ENCODE measurements at regions of chr7 and their contacts with region 1.

Region 1: GRCh38 chr7:150448789-150449147 is 1.7 kb upstream of the GIMAP8 start:
- DNase-seq: peak; percentile 76 to 84
- ATAC-seq: peak in 7 of 8 donors; percentile 42 to 64 (median 59)
- H3K4me3 ChIP-seq: peak overlapping the region in 4 of 10 donors; percentile 3 to 67 (median 36)
- H3K27ac ChIP-seq: peak overlapping the region in 9 of 10 donors; percentile 73 to 95 (median 90)
- H3K4me1 ChIP-seq: peaks cover 0 to 54% (median 32%) of the 10 kb centered on the region in 9 donors
- H3K27me3 ChIP-seq: no peaks in the 10 kb centered on the region
- CTCF ChIP-seq: peak; percentile 83 to 95 (median 91)

Region 2: GRCh38 chr7:150317748-150318444 is 130.9 kb before region 1 on chr7:
- intact Hi-C with region 1: no loop called
- DNase-seq: no peak
- ATAC-seq: no peak
- H3K4me3 ChIP-seq: no peak overlapping the region
- H3K27ac ChIP-seq: peak overlapping the region in 1 of 10 donors; percentile 24
- H3K4me1 ChIP-seq: peaks cover 0 to 8% (median 6%) of the 10 kb centered on the region in 9 donors
- H3K27me3 ChIP-seq: peaks cover 0 to 11% (median 2%) of the 10 kb centered on the region in 7 donors
- CTCF ChIP-seq: no peak

Region 3: DNA sequence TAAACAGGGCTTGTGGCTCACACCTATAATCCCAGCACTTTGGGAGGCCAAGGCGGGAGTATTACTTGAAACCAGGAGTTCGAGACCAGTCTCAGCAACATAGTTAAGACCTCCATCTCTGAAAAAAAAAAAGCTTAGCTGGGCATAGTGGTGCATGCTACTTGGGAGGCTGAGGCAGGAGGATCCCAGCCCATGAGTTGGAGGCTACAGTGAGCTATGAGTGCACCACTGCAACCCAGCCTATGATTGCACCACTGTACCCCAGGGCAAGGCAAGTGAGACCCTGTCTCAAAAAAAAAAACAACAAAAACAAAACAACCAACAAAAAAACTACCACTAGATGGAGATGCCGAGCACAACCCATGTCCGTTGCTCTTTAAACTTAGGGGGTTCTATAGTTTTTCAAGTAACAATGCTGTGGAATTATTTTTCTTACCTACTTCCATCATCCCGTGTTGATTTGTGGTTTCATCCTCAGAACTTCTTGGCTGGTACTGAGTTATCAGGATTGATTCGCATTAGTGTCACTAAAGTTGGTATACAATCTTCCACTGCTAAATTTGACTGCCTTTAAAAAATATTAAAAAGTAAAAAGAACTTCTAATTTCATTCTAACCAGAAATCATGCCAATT is 92.4 kb before region 1 on chr7:
- intact Hi-C with region 1: no loop called
- DNase-seq: no peak
- ATAC-seq: peak in 1 of 8 donors; percentile 19
- H3K4me3 ChIP-seq: no peak overlapping the region
- H3K27ac ChIP-seq: no peak overlapping the region
- H3K4me1 ChIP-seq: peaks cover 0 to 14% (median under 1%) of the 10 kb centered on the region in 9 donors
- H3K27me3 ChIP-seq: no peaks in the 10 kb centered on the region
- CTCF ChIP-seq: peak; percentile 39 to 79 (median 71)

Region 4: DNA sequence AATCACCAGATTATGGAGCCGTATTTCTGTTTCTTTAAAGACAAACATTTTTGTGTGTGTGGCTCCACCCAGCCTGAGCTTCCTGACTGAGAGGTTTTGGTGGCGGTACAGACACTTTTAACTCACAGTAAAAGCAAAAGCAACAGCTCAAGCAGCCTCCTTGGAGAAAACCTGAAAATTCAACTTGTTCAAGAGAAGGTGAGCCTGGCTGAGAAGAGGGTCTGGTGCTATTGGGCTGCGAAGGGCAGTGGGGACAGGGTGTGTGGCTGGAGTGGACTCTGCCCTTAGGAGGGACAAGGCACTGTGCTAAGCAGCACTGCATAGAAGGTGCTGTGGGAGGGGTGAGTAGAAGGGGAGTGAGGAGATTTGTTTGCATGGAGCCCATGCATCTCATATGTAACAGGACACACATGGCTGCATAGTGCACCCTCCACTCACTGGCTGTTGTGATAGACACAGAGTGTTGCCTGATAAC is 66.0 kb after region 1 on chr7 and contains the start of gene GIMAP7:
- intact Hi-C with region 1: loop called in 6 of 10 experiments (anchors 2 to 5 kb)
- DNase-seq: peak in 1 of 2 donors; percentile 38
- ATAC-seq: peak; percentile 54 to 83 (median 80)
- H3K4me3 ChIP-seq: peak within 1 kb of the TSS; percentile 32 to 68 (median 56)
- H3K27ac ChIP-seq: peak within 1 kb of the TSS; percentile 60 to 95 (median 80)
- H3K4me1 ChIP-seq: peaks cover 0 to 25% (median 3%) of the 10 kb centered on the region in 9 donors
- H3K27me3 ChIP-seq: no peaks in the 10 kb centered on the region
- CTCF ChIP-seq: no peak
- total RNA-seq, gene GIMAP7: 7.5 to 41.2 (median 19.6) TPM

Region 5: DNA sequence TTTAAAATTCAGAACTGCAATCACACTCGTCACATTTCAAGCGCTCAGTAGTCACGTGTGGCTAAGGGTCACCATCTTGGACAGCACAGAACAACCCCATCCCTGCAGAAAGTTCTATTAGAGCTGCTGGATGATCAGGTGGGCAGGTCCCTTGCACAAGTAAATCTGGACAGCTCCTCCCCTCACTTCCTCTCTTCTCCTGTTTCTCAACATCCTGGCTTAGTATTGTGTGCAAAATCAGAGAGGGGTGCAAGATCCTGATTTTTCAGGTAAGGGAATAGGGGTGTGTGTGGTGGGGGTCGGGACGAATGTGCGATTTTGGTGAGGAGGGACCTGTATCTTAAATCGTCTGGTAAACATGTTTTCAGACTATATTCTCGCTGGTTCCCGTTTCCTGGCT is 118.4 kb after region 1 on chr7 and contains the start of gene GIMAP4:
- intact Hi-C with region 1: loop called in 4 of 10 experiments (anchors 5 kb)
- DNase-seq: peak in 1 of 2 donors; percentile 51
- ATAC-seq: peak; percentile 64 to 90 (median 82)
- H3K4me3 ChIP-seq: peak within 1 kb of the TSS; percentile 37 to 72 (median 60)
- H3K27ac ChIP-seq: peak within 1 kb of the TSS; percentile 55 to 97 (median 89)
- H3K4me1 ChIP-seq: peaks cover 0 to 33% (median 11%) of the 10 kb centered on the region in 9 donors
- H3K27me3 ChIP-seq: no peaks in the 10 kb centered on the region
- CTCF ChIP-seq: no peak
- total RNA-seq, gene GIMAP4: 19.7 to 68.6 (median 31.0) TPM

Region 6: DNA sequence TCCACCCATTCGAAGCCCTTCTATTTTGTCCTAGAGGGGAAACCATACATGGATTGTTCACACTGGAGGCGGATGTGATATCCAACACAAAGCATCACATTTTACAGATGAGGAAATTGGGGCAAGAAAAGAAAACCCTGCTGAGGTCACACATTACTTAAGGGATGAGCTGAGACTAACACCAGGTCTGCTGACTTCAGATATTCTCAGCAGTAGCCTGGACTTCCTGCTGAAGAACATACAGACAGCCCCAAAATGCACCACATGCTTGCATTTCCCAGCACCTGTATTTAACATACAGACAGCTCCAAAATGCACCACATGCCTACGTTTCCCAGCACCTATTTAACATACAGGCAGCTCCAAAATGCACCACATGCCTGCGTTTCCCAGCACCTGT is 299.6 kb after region 1 on chr7:
- intact Hi-C with region 1: loop called in 4 of 10 experiments (anchors 2 to 5 kb)
- DNase-seq: no peak
- ATAC-seq: no peak
- H3K4me3 ChIP-seq: no peak overlapping the region
- H3K27ac ChIP-seq: peak overlapping the region in 2 of 10 donors; percentile 13 to 14
- H3K4me1 ChIP-seq: peaks cover 14 to 62% (median 41%) of the 10 kb centered on the region in 9 donors
- H3K27me3 ChIP-seq: no peaks in the 10 kb centered on the region
- CTCF ChIP-seq: no peak

Region 7: GRCh38 chr7:150860291-150860977 is 411.7 kb after region 1 on chr7:
- intact Hi-C with region 1: loop called in 1 of 10 experiments (anchors 10 kb)
- DNase-seq: no peak
- ATAC-seq: peak in 3 of 8 donors; percentile 38 to 55 (median 43)
- H3K4me3 ChIP-seq: no peak overlapping the region
- H3K27ac ChIP-seq: no peak overlapping the region
- H3K4me1 ChIP-seq: no peaks in the 10 kb centered on the region
- H3K27me3 ChIP-seq: peaks cover 0 to 10% (median 0%) of the 10 kb centered on the region in 7 donors
- CTCF ChIP-seq: peak in 8 of 9 donors; percentile 7 to 50 (median 40)